BJ (cell line): ENCODE measurements at regions of chr1 and their contacts with region 1.

Region 1: GRCh38 chr1:172083191-172083590 is 241.9 kb downstream of the DNM3 start:
- DNase-seq: no peak
- H3K4me3 ChIP-seq: no peak overlapping the region
- H3K27me3 ChIP-seq: no peaks in the 10 kb centered on the region; the same call in 1 of the 2 replicates
- CTCF ChIP-seq: no peak

Region 2: DNA sequence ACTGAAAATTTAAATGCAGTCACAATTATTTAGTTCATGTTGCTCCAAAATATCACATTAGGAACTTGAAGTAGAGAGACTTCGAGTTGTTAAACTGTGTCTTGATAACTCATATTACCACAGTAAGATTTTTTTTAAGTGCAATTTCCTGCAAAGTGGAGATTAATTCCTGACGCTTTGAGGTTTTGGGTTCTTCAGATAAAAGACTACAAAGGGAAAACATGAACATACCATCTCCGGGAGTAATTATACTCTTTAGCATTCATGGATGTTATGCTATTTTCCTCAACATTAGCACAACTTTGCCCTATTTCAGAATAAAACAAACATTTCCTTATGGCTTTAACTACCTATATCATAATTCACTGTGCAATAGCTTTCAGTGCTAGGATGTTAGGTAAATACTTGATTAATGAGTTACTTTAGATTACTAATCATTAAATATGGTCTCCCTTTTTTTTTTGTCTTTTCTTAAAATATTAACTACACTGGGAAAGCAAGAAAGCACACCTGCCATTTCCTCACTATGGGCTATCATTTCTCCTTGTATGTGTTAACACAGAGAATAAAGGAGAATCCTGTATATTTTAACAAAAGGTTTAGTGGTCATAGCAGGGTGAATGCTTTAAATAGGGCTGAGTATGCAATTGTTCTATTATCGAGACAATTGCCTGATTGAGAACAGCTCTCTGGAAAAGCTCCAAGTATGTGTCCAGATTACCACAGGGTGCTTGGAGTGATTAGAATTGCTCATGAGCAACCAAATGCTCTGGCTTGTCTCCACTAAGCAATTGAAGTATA is 84.8 kb after region 1 on chr1:
- CTCF ChIA-PET with region 1: no interaction called
- POLR2A ChIA-PET with region 1: no interaction called
- DNase-seq: no peak
- H3K4me3 ChIP-seq: no peak overlapping the region
- H3K27me3 ChIP-seq: no peaks in the 10 kb centered on the region
- CTCF ChIP-seq: no peak

Region 3: GRCh38 chr1:172391976-172392375 is 308.8 kb after region 1 on chr1:
- CTCF ChIA-PET with region 1: no interaction called
- POLR2A ChIA-PET with region 1: interaction called, 24 read pairs
- DNase-seq: no peak
- H3K4me3 ChIP-seq: no peak overlapping the region
- H3K27me3 ChIP-seq: no peaks in the 10 kb centered on the region
- CTCF ChIP-seq: no peak